HEK293 (cell line): ENCODE measurements at regions of chr5 and their contacts with region 1.

Region 1: GRCh38 chr5:149990518-149991376 is 9.7 kb downstream of the TIGD6 start:
- H3K4me3 ChIP-seq: no peak overlapping the region
- H3K27ac ChIP-seq: no peak overlapping the region
- H3K4me1 ChIP-seq: 0 out of 2 replicates have a peak, but pooled peaks cover 2% of the 10 kb centered on the region
- CTCF ChIP-seq: peak; percentile 73; the same call in 1 of the 2 replicates

Region 2: GRCh38 chr5:149636851-149637246 is 353.9 kb before region 1 on chr5:
- CTCF ChIA-PET with region 1: interaction called, 30 read pairs
- POLR2A ChIA-PET with region 1: no interaction called
- H3K4me3 ChIP-seq: no peak overlapping the region
- H3K27ac ChIP-seq: no peak overlapping the region
- H3K4me1 ChIP-seq: no peaks in the 10 kb centered on the region
- CTCF ChIP-seq: peak; percentile 95

Region 3: GRCh38 chr5:149749481-149750365 is 241.0 kb before region 1 on chr5:
- CTCF ChIA-PET with region 1: no interaction called
- POLR2A ChIA-PET with region 1: no interaction called
- H3K4me3 ChIP-seq: no peak overlapping the region
- H3K27ac ChIP-seq: no peak overlapping the region
- H3K4me1 ChIP-seq: peaks cover 2% of the 10 kb centered on the region; the same call in 1 of the 2 replicates
- CTCF ChIP-seq: no peak

Region 4: DNA sequence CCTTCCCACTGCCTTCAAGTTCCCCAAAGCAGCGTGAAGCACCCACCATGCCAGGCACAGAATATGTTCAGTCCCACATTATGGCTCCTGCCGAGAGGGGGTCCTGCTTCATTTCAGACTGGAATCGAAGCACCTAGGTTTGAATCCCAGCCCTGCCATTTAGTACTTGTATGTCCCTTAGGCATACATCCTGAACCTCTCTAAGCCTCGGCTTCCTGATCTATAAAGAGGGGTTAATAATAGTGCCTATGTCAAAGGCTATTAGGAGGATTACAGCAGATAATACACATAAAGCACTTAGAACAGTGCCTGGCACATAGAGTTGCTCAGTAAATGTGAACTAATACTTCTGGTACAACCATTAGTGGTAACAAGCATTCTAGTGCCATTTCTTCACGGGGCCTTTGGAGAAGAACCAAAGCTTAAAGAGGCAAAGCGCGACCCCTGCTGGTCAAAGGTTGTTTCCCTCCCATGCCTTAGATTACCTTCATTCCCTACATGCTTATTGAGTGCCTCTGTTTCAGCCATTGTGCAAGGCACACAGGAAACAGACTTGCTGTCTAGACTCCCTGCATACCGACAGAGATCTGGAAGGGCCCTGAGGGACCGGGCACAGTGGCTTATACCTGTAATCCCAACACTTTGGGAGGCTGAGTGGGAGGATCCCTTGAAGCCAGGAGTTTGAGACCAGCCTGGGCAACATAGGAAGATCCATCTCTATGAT is 162.4 kb before region 1 on chr5:
- CTCF ChIA-PET with region 1: interaction called, 234 read pairs
- POLR2A ChIA-PET with region 1: no interaction called
- H3K4me3 ChIP-seq: no peak overlapping the region
- H3K27ac ChIP-seq: no peak overlapping the region
- H3K4me1 ChIP-seq: no peaks in the 10 kb centered on the region
- CTCF ChIP-seq: peak; percentile 65

Region 5: GRCh38 chr5:149852641-149853330 is 138.0 kb before region 1 on chr5:
- CTCF ChIA-PET with region 1: interaction called, 51 read pairs
- POLR2A ChIA-PET with region 1: no interaction called
- H3K4me3 ChIP-seq: no peak overlapping the region
- H3K27ac ChIP-seq: no peak overlapping the region
- H3K4me1 ChIP-seq: no peaks in the 10 kb centered on the region
- CTCF ChIP-seq: peak; percentile 63

Region 6: GRCh38 chr5:149960272-149961185 is 30.2 kb before region 1 on chr5 and contains the start of gene SLC26A2:
- CTCF ChIA-PET with region 1: interaction called, 46 read pairs
- POLR2A ChIA-PET with region 1: interaction called, 5 read pairs
- H3K4me3 ChIP-seq: peak within 1 kb of the TSS; percentile 72
- H3K27ac ChIP-seq: peak within 1 kb of the TSS; percentile 54; the same call in 1 of the 2 replicates
- H3K4me1 ChIP-seq: peaks cover 7% of the 10 kb centered on the region; the same call in 1 of the 2 replicates
- CTCF ChIP-seq: peak; percentile 77

Region 7: GRCh38 chr5:149979896-149980295 is 10.9 kb before region 1 on chr5:
- CTCF ChIA-PET with region 1: interaction called, 23 read pairs
- POLR2A ChIA-PET with region 1: no interaction called
- H3K4me3 ChIP-seq: no peak overlapping the region
- H3K27ac ChIP-seq: no peak overlapping the region
- H3K4me1 ChIP-seq: no peaks in the 10 kb centered on the region
- CTCF ChIP-seq: no peak